Activated CD4-positive, alpha-beta T cell treated with anti-CD3 and anti-CD28 coated beads for 36 hours (primary cell): ENCODE measurements at regions of chr5 and their contacts with region 1.

Region 1: DNA sequence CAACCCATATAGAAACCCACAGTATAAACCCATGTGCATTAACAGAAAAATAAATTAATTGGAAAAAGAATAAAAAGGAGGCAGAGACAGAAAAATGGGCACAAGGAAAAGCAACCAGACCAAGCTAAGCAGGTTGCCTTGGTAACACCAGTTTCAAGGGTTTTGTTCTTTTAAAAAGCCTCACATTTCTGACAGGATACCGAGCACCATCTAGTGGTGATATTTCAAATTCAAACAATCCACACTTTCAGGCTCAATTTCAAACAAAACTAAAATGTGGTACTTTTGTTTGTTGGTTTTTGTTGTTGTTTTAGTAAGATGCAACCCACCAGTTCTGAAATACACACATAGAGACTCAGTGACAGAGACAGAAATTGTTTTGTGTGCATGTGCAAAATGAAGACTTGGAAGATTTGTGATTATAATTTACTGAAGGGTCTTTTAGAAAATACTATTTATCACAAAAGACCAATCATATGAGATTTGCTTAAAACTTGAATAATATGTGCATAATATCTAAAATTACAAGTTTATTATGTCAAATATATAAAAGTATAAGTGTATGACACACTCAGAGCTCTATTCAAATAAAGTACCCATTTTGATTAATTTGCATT is 318.2 kb downstream of the SLCO4C1 start:
- DNase-seq: no peak
- ATAC-seq: no peak
- H3K4me3 Mint-ChIP-seq: no peak overlapping the region
- H3K27ac Mint-ChIP-seq: no peak overlapping the region
- H3K4me1 Mint-ChIP-seq: no peaks in the 10 kb centered on the region
- H3K27me3 Mint-ChIP-seq: peaks cover 3% of the 10 kb centered on the region

Region 2: GRCh38 chr5:102223542-102224477 is 246.0 kb after region 1 on chr5:
- CTCF ChIA-PET with region 1: no interaction called
- POLR2A ChIA-PET with region 1: no interaction called
- intact Hi-C with region 1: loop called in 1 of 2 experiments (anchors 10 kb)
- DNase-seq: no peak
- ATAC-seq: no peak
- H3K4me3 Mint-ChIP-seq: no peak overlapping the region
- H3K27ac Mint-ChIP-seq: no peak overlapping the region
- H3K4me1 Mint-ChIP-seq: no peaks in the 10 kb centered on the region
- H3K27me3 Mint-ChIP-seq: peaks cover 4% of the 10 kb centered on the region